Heart right ventricle (tissue), 16 donors: ENCODE measurements at regions of chr6 and their contacts with region 1.

Region 1: GRCh38 chr6:75208298-75209183 is 2.7 kb upstream of the COL12A1 start:
- DNase-seq: peak; percentile 84 to 87
- ATAC-seq: peak; percentile 53 to 76 (median 71)
- H3K4me3 ChIP-seq: peak overlapping the region in 9 of 10 donors; percentile 14 to 49 (median 37)
- H3K27ac ChIP-seq: peak overlapping the region in 7 of 10 donors; percentile 23 to 71 (median 60)
- H3K4me1 ChIP-seq: peaks cover 0 to 70% (median 43%) of the 10 kb centered on the region in 9 donors
- H3K27me3 ChIP-seq: peaks cover 0 to 77% (median 42%) of the 10 kb centered on the region in 7 donors
- CTCF ChIP-seq: peak; percentile 59 to 95 (median 88)

Region 2: GRCh38 chr6:73739096-73739495 is 1469.4 kb before region 1 on chr6:
- intact Hi-C with region 1: loop called (anchors 1 to 5 kb)
- DNase-seq: no peak
- ATAC-seq: peak in 7 of 8 donors; percentile 58 to 86 (median 73)
- H3K4me3 ChIP-seq: no peak overlapping the region
- H3K27ac ChIP-seq: no peak overlapping the region
- H3K4me1 ChIP-seq: peaks cover 0 to 16% (median 3%) of the 10 kb centered on the region in 9 donors
- H3K27me3 ChIP-seq: no peaks in the 10 kb centered on the region
- CTCF ChIP-seq: peak; percentile 68 to 86 (median 78)

Region 3: DNA sequence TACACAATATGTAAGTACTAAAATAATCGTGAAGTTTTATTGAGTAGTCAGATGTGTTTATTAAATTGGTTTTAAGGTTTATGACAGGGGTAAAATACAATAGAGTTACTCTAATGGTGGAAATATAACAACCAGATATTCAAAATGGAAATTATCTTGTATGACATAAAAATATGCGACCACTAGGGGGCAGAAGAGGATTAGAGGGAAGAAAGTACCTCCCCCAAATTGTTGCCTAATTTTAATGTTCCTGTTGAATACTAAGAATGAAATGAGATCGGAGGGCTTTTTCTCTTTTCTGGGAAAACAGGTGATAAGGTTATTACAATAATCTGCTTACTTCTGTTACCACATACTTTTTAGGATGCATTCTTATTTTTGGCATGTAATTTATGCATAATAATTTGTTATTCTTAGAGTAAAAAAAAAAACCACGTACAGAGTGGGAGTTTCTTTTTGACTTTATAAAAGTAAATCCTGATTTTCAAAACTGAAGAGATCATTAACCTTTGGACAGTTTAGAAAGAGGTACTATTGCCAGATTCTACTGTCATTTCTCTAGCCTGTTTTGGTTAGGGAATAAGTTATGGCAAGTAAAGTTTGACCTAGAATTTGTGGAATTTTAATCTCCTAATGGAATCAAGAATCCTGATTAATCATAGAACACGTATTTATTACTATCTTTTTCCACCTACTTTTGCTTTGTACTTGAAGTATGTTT is 1353.4 kb before region 1 on chr6:
- intact Hi-C with region 1: loop called in 6 of 10 experiments (anchors 1 to 10 kb)
- DNase-seq: peak in 1 of 2 donors; percentile 42
- ATAC-seq: peak in 4 of 8 donors; percentile 23 to 64 (median 36)
- H3K4me3 ChIP-seq: no peak overlapping the region
- H3K27ac ChIP-seq: peak overlapping the region in 5 of 10 donors; percentile 8 to 54 (median 45)
- H3K4me1 ChIP-seq: peaks cover 0 to 4% (median 0%) of the 10 kb centered on the region in 9 donors
- H3K27me3 ChIP-seq: no peaks in the 10 kb centered on the region
- CTCF ChIP-seq: peak; percentile 57 to 77 (median 75)

Region 4: GRCh38 chr6:74091136-74091793 is 1117.3 kb before region 1 on chr6:
- intact Hi-C with region 1: loop called in 9 of 10 experiments (anchors 2 to 10 kb)
- DNase-seq: no peak
- ATAC-seq: peak in 5 of 8 donors; percentile 21 to 77 (median 49)
- H3K4me3 ChIP-seq: no peak overlapping the region
- H3K27ac ChIP-seq: peak overlapping the region in 1 of 10 donors; percentile 37
- H3K4me1 ChIP-seq: peaks cover 0 to 6% (median 0%) of the 10 kb centered on the region in 9 donors
- H3K27me3 ChIP-seq: no peaks in the 10 kb centered on the region
- CTCF ChIP-seq: peak; percentile 42 to 81 (median 70)

Region 5: GRCh38 chr6:74579794-74580193 is 628.7 kb before region 1 on chr6:
- intact Hi-C with region 1: loop called in 1 of 10 experiments (anchors 5 kb)
- DNase-seq: no peak
- ATAC-seq: no peak
- H3K4me3 ChIP-seq: no peak overlapping the region
- H3K27ac ChIP-seq: no peak overlapping the region
- H3K4me1 ChIP-seq: no peaks in the 10 kb centered on the region
- H3K27me3 ChIP-seq: no peaks in the 10 kb centered on the region
- CTCF ChIP-seq: no peak

Region 6: DNA sequence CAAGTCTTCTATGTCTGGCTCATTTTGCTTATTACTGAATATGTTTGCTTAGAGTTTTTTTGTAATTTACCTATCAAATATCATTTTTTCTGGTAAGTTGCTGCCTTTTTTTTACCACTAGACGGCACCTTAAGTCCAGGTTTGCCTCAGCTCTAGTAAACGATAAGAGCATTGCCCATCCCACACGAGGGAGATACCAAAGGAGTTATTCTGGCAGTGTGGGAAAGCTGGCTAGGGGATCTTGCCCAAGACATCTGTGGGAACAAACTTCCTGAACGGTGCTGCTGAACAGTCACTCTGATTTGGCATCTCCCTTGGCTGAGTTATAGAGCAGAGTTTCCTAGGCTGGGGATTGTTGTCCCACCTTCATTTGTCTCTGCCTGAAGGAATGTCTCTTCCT is 309.1 kb before region 1 on chr6:
- intact Hi-C with region 1: loop called in 1 of 10 experiments (anchors 10 kb)
- DNase-seq: no peak
- ATAC-seq: no peak
- H3K4me3 ChIP-seq: no peak overlapping the region
- H3K27ac ChIP-seq: no peak overlapping the region
- H3K4me1 ChIP-seq: no peaks in the 10 kb centered on the region
- H3K27me3 ChIP-seq: no peaks in the 10 kb centered on the region
- CTCF ChIP-seq: no peak

Region 7: GRCh38 chr6:75243333-75244062 is 35.0 kb after region 1 on chr6 and contains the start of gene COX7A2:
- intact Hi-C with region 1: no loop called
- DNase-seq: peak; percentile 82 to 94
- ATAC-seq: peak; percentile 97 to 99 (median 98)
- H3K4me3 ChIP-seq: peak within 1 kb of the TSS; percentile 53 to 82 (median 75)
- H3K27ac ChIP-seq: peak within 1 kb of the TSS; percentile 79 to 95 (median 90)
- H3K4me1 ChIP-seq: peaks cover 0 to 35% (median 31%) of the 10 kb centered on the region in 9 donors
- H3K27me3 ChIP-seq: no peaks in the 10 kb centered on the region
- CTCF ChIP-seq: no peak
- total RNA-seq, gene COX7A2: 789 to 1,205 (median 1,111) TPM